Activated T-helper 2 cell treated with anti-CD3 and anti-CD28 coated beads, Interferon-gamma antibody, Interleukin-2, Interleukin-4, amounts not matched to agents 10 μg/mL and 5 μg/mL and 100 μg/mL, durations not matched to agents 14 hours and 24 hours and 36 hours (primary cell): ENCODE measurements at regions of chr10 and their contacts with region 1.

Region 1: DNA sequence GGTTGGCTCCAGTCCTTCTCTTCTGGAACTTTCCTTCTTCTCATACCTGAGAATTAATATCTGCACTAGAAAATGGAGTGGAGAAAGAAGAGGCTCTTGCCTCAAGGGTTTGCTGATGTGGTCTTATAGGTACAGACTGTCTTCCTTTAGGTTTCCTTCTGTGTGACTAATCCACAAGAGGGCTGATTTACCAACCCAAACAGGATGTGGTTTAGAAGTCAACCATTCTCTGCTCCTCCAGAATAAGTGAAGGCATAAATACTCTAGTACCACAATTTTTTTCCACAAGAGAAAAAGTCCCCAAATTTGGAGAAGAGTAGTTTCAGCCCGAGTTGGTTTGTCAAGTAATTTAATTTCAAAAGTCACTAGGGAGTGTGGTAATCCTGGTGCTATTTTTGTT is 85.8 kb downstream of the NRP1 start:
- DNase-seq: peak; percentile 18
- H3K4me3 Mint-ChIP-seq: peak overlapping the region; percentile 43
- H3K27ac Mint-ChIP-seq: peak overlapping the region; percentile 44
- H3K4me1 Mint-ChIP-seq: peaks cover 80% of the 10 kb centered on the region
- H3K27me3 Mint-ChIP-seq: peaks cover 25% of the 10 kb centered on the region

Region 2: GRCh38 chr10:33008499-33009243 is 240.0 kb before region 1 on chr10:
- intact Hi-C with region 1: loop called (anchors 5 kb)
- DNase-seq: peak; percentile 45
- H3K4me3 Mint-ChIP-seq: peak overlapping the region; percentile 67
- H3K27ac Mint-ChIP-seq: peak overlapping the region; percentile 50
- H3K4me1 Mint-ChIP-seq: peaks cover 30% of the 10 kb centered on the region
- H3K27me3 Mint-ChIP-seq: peaks cover 1% of the 10 kb centered on the region

Region 3: GRCh38 chr10:33193057-33193700 is 55.5 kb before region 1 on chr10:
- intact Hi-C with region 1: loop called (anchors 5 kb)
- DNase-seq: peak; percentile 57
- H3K4me3 Mint-ChIP-seq: no peak overlapping the region
- H3K27ac Mint-ChIP-seq: no peak overlapping the region
- H3K4me1 Mint-ChIP-seq: no peaks in the 10 kb centered on the region
- H3K27me3 Mint-ChIP-seq: peaks cover 35% of the 10 kb centered on the region

Region 4: DNA sequence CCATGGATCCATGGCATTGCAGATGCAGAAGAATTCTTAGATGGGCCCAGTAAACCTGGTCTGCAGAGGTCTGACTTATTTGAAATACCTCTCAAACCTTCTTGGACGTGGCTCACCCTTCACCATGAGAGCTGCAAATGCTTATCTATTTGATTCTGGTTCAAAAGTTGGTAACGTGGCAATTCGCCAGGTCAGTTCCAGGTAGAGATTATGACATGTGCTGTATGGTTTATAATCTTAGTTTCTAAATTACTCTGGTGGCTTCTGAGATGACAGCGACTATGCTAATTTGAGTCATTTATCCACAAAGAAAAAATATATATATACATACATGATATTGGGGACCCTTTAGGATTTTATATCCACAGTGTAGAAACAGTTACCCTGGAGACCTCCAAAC is 17.0 kb after region 1 on chr10:
- intact Hi-C with region 1: loop called (anchors 1 kb)
- DNase-seq: peak; percentile 14
- H3K4me3 Mint-ChIP-seq: no peak overlapping the region
- H3K27ac Mint-ChIP-seq: no peak overlapping the region
- H3K4me1 Mint-ChIP-seq: peaks cover 22% of the 10 kb centered on the region
- H3K27me3 Mint-ChIP-seq: peaks cover 37% of the 10 kb centered on the region

Region 5: GRCh38 chr10:33302208-33302829 is 53.7 kb after region 1 on chr10:
- intact Hi-C with region 1: no loop called
- DNase-seq: no peak
- H3K4me3 Mint-ChIP-seq: no peak overlapping the region
- H3K27ac Mint-ChIP-seq: no peak overlapping the region
- H3K4me1 Mint-ChIP-seq: peaks cover 8% of the 10 kb centered on the region
- H3K27me3 Mint-ChIP-seq: peaks cover 8% of the 10 kb centered on the region

Region 6: DNA sequence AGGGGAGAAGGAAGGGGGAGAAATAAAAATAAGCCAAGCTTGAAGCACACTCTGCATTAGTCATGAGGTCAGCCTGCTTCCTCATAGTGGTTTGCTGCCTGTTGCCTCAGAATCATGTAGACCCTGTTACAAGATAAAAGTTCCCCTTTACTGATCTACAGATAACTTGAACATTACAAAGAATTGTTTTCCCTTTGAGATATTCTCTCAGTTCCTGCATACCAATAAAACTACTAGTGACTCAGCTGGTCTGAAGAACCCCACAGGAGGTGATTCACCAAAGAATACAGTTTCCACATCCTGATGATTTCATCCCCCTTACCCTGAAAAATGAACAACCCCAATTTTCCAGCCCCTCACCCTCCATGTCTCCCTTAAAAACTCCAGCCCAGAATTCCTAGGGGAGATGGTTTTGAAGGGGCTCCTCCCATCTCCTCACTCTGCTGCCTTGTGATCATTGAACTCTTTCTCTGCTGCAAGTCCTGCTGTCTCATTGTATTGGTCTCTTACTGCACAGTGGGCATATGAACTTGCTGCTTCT is 117.3 kb after region 1 on chr10:
- intact Hi-C with region 1: loop called (anchors 2 kb)
- DNase-seq: no peak
- H3K4me3 Mint-ChIP-seq: no peak overlapping the region
- H3K27ac Mint-ChIP-seq: peak overlapping the region; percentile 83
- H3K4me1 Mint-ChIP-seq: peaks cover 29% of the 10 kb centered on the region
- H3K27me3 Mint-ChIP-seq: no peaks in the 10 kb centered on the region

Region 7: DNA sequence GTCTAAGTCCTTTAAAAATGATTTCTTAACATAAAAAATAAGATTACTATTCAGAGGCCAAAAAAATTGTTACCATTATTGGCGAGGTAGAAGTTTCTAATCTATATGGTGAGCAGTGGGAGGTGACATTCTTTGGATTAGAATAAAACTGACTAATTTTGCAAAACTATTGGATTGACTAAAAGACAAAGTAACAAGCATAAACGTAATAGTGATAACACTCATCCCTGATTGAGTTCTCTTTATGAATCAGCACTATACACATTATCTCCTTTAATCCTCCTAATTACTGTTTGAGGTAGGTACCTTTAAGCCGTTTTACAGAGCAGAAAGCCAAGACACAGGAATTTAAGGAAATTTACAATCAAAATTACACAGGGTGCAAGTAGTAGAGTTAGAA is 225.1 kb after region 1 on chr10:
- intact Hi-C with region 1: no loop called
- DNase-seq: no peak
- H3K4me3 Mint-ChIP-seq: no peak overlapping the region
- H3K27ac Mint-ChIP-seq: no peak overlapping the region
- H3K4me1 Mint-ChIP-seq: no peaks in the 10 kb centered on the region
- H3K27me3 Mint-ChIP-seq: peaks cover 5% of the 10 kb centered on the region